PC-9 (cell line): ENCODE measurements at regions of chr12 and their contacts with region 1.

Region 1: DNA sequence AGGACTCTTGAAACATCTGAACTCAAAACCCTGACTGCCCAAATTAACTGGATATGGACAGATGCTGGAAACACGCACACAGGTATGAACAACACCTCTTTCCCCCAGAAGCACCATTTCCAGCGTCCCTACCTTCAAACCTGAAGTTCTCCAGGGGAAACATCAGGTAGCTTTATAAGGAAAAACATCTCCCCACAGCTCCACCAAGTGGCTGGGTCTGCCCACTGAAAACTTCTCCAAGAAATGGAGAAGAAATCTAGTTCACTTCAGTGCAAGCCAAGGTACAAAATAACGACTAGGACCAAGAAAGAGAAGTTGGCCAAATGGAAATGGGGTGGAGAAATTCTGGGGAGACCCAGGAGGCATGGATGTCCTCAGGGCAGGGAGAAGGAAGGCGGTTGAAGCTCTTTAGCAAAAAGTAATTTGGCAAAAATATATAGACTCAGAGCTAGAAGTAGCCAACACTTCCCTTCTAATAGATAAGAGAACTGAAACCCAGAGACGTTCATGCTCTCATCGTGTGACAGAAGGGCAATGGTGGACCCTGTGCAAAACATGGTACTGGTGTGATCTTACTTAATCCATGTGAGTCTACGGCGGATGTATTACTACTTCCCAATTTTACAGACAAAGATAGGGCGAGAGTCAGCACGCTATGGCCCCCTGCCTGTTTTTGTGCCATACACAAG is 10.5 kb upstream of the NUAK1 start:
- DNase-seq: peak in 1 of 2 experiments; percentile 27
- H3K4me3 ChIP-seq: no peak overlapping the region
- H3K27ac ChIP-seq: no peak overlapping the region
- H3K4me1 ChIP-seq: no peaks in the 10 kb centered on the region
- H3K27me3 ChIP-seq: no peaks in the 10 kb centered on the region
- CTCF ChIP-seq: peak; percentile 68; the same call in 1 of the 2 replicates

Region 2: GRCh38 chr12:105659355-105660075 is 489.7 kb before region 1 on chr12:
- CTCF ChIA-PET with region 1: interaction called, 17 read pairs
- POLR2A ChIA-PET with region 1: no interaction called
- intact Hi-C with region 1: no loop called
- DNase-seq: peak in 1 of 2 experiments; percentile 64
- H3K4me3 ChIP-seq: no peak overlapping the region
- H3K27ac ChIP-seq: no peak overlapping the region
- H3K4me1 ChIP-seq: no peaks in the 10 kb centered on the region
- H3K27me3 ChIP-seq: no peaks in the 10 kb centered on the region
- CTCF ChIP-seq: no peak

Region 3: GRCh38 chr12:106195621-106196027 is 46.4 kb after region 1 on chr12:
- CTCF ChIA-PET with region 1: no interaction called
- POLR2A ChIA-PET with region 1: no interaction called
- intact Hi-C with region 1: no loop called
- DNase-seq: peak in 1 of 2 experiments; percentile 2
- H3K4me3 ChIP-seq: no peak overlapping the region
- H3K27ac ChIP-seq: no peak overlapping the region
- H3K4me1 ChIP-seq: no peaks in the 10 kb centered on the region
- H3K27me3 ChIP-seq: peaks cover 5% of the 10 kb centered on the region; the same call in 1 of the 2 replicates
- CTCF ChIP-seq: no peak